ENCODE measurements at regions of chr1 and their contacts with region 1.

Region 1: DNA sequence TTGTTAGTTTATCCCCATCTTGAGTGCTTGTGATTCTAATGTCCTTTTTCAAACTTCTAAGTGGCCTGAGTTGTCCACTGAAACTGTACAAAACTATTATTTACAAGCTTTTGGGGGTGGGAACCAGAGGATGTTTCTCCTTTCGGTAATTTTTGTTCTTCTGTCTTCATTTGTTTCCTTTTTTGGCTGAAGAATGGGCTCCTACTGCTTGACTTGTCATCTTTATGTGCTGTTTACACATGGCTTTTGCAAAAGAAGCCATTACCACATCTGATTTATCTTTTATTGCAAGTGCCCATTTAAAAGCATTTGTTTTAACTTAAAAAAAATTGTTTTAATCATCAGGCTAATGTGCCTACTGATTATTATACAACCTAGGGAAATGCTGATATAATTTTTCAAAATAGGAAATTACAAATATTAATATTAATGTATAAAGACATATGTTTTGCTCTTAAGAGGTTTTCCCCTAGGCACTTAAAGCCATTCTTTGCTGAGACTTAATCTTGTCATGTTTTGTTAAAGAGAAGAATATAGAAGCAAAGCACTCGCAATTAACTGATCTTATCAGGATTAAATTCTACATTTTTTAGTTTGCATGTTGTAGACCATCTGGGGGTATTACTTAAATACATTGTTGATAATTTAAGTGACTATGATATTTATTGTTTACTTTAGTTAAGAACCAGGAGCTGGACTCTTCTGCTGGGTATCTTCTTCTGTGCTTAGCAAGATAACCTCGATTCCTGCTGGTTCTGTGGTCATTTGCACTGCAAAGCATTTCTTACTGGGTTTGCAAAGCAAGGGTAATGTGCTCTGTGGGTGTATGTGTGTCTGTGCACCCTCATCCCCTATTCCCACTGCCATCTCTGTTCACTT is 40.1 kb downstream of the TMEM200B start:
- H3K4me3 Mint-ChIP-seq: no peak overlapping the region
- H3K27ac Mint-ChIP-seq: no peak overlapping the region
- H3K4me1 Mint-ChIP-seq: no peaks in the 10 kb centered on the region
- H3K27me3 Mint-ChIP-seq: no peaks in the 10 kb centered on the region

Region 2: DNA sequence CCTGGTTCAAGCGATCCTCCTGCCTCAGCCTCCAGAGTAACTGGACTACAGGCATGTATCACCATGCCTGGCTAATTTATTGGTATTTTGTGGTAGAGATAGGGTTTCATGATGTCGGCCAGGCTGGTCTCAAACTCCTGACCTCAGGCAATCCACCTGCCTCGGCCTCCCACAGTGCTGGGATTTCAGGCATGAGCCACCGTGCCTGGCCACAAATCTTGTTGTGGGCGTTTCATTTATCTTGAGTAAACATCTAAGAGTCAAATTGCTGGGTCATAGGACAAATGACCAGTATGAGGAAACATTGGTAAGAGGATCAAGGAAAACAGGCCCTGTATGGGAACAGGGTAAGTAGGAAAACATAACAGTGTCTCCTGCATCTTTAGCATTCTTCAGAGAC is 22.3 kb after region 1 on chr1:
- intact Hi-C with region 1: loop called (anchors 1 kb)
- H3K4me3 Mint-ChIP-seq: no peak overlapping the region
- H3K27ac Mint-ChIP-seq: no peak overlapping the region
- H3K4me1 Mint-ChIP-seq: no peaks in the 10 kb centered on the region
- H3K27me3 Mint-ChIP-seq: no peaks in the 10 kb centered on the region

Region 3: DNA sequence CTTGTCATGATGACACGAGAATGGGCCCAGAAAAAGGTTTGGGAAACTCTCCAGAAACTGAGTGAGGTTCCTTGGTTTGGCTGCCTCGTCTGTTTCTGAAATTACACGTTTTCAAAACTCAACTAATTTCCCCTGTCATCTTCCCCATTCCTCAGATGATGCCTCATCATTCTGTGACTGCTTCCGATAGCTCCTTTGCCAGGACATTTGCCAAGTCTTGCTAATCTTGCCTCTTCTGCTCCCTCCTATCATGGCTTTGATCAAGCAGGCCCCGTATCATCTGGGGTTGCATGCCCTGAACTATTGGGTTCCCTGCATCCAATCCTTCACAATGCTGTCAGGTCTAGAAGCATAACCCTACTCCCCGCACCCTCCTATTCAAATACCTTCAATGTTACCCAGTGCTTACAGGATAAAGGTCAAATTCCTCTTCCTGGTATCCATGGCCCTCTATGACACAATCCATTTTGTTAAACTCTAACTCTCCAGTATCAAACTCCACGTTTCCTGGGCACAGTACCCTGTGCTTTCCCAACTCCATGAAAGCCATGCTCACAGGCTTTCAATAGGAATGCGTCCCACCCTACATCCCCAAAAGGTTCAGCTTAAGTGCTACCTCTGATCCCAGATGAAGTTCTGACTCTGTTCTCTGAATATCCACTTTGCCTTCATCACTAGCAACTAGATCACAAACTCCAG is 62.3 kb after region 1 on chr1:
- intact Hi-C with region 1: no loop called
- H3K4me3 Mint-ChIP-seq: no peak overlapping the region
- H3K27ac Mint-ChIP-seq: no peak overlapping the region
- H3K4me1 Mint-ChIP-seq: no peaks in the 10 kb centered on the region
- H3K27me3 Mint-ChIP-seq: no peaks in the 10 kb centered on the region

Region 4: GRCh38 chr1:29171089-29171488 is 87.5 kb after region 1 on chr1:
- intact Hi-C with region 1: no loop called
- H3K4me3 Mint-ChIP-seq: no peak overlapping the region
- H3K27ac Mint-ChIP-seq: peak overlapping the region; percentile 53
- H3K4me1 Mint-ChIP-seq: peaks cover 36% of the 10 kb centered on the region
- H3K27me3 Mint-ChIP-seq: no peaks in the 10 kb centered on the region

Region 5: DNA sequence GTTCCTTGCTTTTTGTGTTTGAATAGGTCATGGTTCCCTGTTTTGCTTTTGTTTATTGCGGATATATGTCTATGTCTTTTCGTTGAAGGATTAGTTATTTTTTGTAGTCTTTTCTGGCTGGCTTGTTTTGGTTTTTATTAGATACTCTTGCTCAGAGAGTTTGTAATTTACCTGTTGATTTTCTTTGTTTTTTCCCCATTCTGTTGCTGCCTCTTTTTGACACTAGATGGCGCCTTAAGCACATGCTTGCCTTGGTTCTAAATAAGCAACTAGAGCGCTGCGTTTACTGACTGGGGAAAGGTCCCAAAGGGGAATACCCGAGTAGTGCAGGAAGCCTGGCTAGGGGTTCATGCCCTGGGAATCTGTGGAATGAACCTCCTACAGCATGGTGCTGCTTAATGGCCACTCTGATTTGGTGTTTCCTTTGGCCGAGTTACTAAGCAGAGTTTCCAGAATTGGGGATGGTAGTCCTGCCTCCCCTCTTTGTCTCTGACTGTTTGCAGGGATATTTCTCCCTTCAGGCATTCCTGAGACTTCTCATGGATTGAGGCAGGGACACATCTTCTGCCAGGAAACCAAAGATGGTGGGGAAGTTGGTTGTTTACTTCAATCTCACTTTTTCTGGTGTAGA is 296.0 kb after region 1 on chr1:
- intact Hi-C with region 1: no loop called
- H3K4me3 Mint-ChIP-seq: no peak overlapping the region
- H3K27ac Mint-ChIP-seq: no peak overlapping the region
- H3K4me1 Mint-ChIP-seq: no peaks in the 10 kb centered on the region
- H3K27me3 Mint-ChIP-seq: peaks cover 7% of the 10 kb centered on the region